ENCODE measurements at regions of chr15 and their contacts with region 1.

Region 1: GRCh38 chr15:70504299-70504951 is 258.9 kb downstream of the UACA start:
- DNase-seq: peak; percentile 76
- ATAC-seq: peak; percentile 31
- H3K4me3 Mint-ChIP-seq: no peak overlapping the region
- H3K27ac Mint-ChIP-seq: peak overlapping the region; percentile 79
- H3K4me1 Mint-ChIP-seq: peaks cover 77% of the 10 kb centered on the region
- H3K27me3 Mint-ChIP-seq: peaks cover 2% of the 10 kb centered on the region

Region 2: GRCh38 chr15:69719527-69720240 is 784.7 kb before region 1 on chr15:
- CTCF ChIA-PET with region 1: interaction called, 3 read pairs
- POLR2A ChIA-PET with region 1: no interaction called
- intact Hi-C with region 1: loop called in 1 of 2 experiments (anchors 5 kb)
- DNase-seq: peak; percentile 76
- ATAC-seq: peak; percentile 89
- H3K4me3 Mint-ChIP-seq: no peak overlapping the region
- H3K27ac Mint-ChIP-seq: peak overlapping the region; percentile 28
- H3K4me1 Mint-ChIP-seq: peaks cover 84% of the 10 kb centered on the region
- H3K27me3 Mint-ChIP-seq: peaks cover 4% of the 10 kb centered on the region

Region 3: GRCh38 chr15:69760890-69761568 is 743.4 kb before region 1 on chr15:
- CTCF ChIA-PET with region 1: interaction called, 3 read pairs
- POLR2A ChIA-PET with region 1: interaction called, 7 read pairs
- intact Hi-C with region 1: loop called in 1 of 2 experiments (anchors 1 kb)
- DNase-seq: peak; percentile 89
- ATAC-seq: peak; percentile 42
- H3K4me3 Mint-ChIP-seq: peak overlapping the region; percentile 25
- H3K27ac Mint-ChIP-seq: peak overlapping the region; percentile 94
- H3K4me1 Mint-ChIP-seq: peaks cover 72% of the 10 kb centered on the region
- H3K27me3 Mint-ChIP-seq: no peaks in the 10 kb centered on the region

Region 4: GRCh38 chr15:70023064-70023768 is 481.2 kb before region 1 on chr15:
- CTCF ChIA-PET with region 1: no interaction called
- POLR2A ChIA-PET with region 1: no interaction called
- intact Hi-C with region 1: no loop called
- DNase-seq: peak; percentile 62
- ATAC-seq: peak; percentile 100
- H3K4me3 Mint-ChIP-seq: no peak overlapping the region
- H3K27ac Mint-ChIP-seq: no peak overlapping the region
- H3K4me1 Mint-ChIP-seq: peaks cover 15% of the 10 kb centered on the region
- H3K27me3 Mint-ChIP-seq: no peaks in the 10 kb centered on the region

Region 5: GRCh38 chr15:70435369-70435768 is 69.1 kb before region 1 on chr15:
- CTCF ChIA-PET with region 1: no interaction called
- POLR2A ChIA-PET with region 1: no interaction called
- intact Hi-C with region 1: no loop called
- DNase-seq: no peak
- ATAC-seq: no peak
- H3K4me3 Mint-ChIP-seq: no peak overlapping the region
- H3K27ac Mint-ChIP-seq: no peak overlapping the region
- H3K4me1 Mint-ChIP-seq: peaks cover 21% of the 10 kb centered on the region
- H3K27me3 Mint-ChIP-seq: no peaks in the 10 kb centered on the region

Region 6: DNA sequence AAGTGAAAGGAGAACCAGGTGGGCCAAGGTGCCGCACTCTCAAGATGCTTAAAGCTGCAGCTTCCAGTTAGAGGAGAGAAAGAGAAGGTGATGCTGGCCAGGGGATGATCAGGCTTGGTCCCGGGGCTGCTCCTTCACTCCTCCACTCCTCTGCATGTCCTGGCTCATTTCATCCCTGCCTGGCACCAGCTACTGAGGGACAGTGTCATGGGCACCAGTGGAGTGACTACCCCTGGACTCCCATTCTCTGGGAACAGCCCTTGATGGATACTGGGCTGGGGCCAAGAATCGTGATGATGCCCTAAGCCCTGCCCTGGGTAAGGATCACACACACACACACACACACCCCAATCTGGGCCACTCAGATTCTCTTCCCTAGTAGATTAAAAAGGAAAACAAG is 15.2 kb after region 1 on chr15:
- CTCF ChIA-PET with region 1: no interaction called
- POLR2A ChIA-PET with region 1: no interaction called
- intact Hi-C with region 1: no loop called
- DNase-seq: no peak
- ATAC-seq: no peak
- H3K4me3 Mint-ChIP-seq: no peak overlapping the region
- H3K27ac Mint-ChIP-seq: no peak overlapping the region
- H3K4me1 Mint-ChIP-seq: peaks cover 7% of the 10 kb centered on the region
- H3K27me3 Mint-ChIP-seq: peaks cover 6% of the 10 kb centered on the region

Region 7: GRCh38 chr15:70559265-70560239 is 55.1 kb after region 1 on chr15:
- CTCF ChIA-PET with region 1: interaction called, 7 read pairs
- POLR2A ChIA-PET with region 1: interaction called, 3 read pairs
- intact Hi-C with region 1: loop called in 1 of 2 experiments (anchors 2 kb)
- DNase-seq: peak; percentile 86
- ATAC-seq: peak; percentile 85
- H3K4me3 Mint-ChIP-seq: no peak overlapping the region
- H3K27ac Mint-ChIP-seq: no peak overlapping the region
- H3K4me1 Mint-ChIP-seq: peaks cover 14% of the 10 kb centered on the region
- H3K27me3 Mint-ChIP-seq: no peaks in the 10 kb centered on the region